ENCODE measurements at regions of chr16 and their contacts with region 1.

Region 1: DNA sequence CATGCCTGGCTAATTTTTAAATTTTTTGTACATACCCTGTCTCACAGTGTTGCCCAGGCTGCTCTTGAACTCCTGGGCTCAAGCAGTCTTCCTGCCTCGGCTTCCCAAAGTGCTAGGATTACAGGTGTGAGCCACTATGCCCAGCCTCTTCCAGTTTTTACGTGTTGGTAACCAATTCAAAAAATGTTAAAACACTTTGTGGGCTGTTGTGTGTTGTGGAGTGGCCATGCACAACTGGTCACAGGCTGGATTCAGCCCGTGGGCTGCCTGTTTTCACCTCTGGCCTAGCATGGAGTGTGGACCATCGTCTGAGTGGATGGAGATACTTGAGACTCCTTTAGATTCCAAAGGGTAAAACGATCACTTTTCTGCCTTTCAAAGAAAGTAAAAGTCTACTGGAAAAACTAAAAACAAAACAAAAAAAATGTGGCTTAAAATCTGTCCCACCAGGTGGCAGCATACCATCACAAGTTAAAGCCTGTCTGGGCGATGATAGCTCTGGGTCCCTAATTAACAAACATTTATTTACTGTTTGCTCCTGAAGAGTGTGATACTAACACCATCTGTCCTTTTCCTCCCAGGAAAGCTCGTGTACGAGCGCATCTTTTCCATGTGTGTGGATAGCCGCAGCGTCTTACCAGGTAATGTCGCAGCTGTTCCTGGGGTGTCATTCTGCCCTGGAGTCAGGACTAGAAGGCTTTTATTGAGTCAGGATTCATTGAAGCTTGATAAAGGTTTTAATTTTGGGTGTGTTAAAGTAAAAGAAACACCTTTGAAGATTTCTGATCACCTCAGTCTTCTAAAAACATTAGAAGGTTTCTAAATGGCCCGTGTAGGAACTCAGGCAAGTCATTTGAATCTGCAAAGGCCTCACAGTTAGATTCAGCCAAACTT is 45.8 kb downstream of the VPS35L start:
- DNase-seq: peak; percentile 38 to 50
- H3K4me3 ChIP-seq: no peak overlapping the region
- H3K27ac ChIP-seq: peak overlapping the region in 2 of 3 donors; percentile 44 to 80
- H3K4me1 ChIP-seq: peaks cover 11 to 13% of the 10 kb centered on the region in 2 donors
- H3K27me3 ChIP-seq: no peaks in the 10 kb centered on the region
- CTCF ChIP-seq: peak; percentile 31 to 87 (median 70)
- POLR2A ChIP-seq: no peak

Region 2: DNA sequence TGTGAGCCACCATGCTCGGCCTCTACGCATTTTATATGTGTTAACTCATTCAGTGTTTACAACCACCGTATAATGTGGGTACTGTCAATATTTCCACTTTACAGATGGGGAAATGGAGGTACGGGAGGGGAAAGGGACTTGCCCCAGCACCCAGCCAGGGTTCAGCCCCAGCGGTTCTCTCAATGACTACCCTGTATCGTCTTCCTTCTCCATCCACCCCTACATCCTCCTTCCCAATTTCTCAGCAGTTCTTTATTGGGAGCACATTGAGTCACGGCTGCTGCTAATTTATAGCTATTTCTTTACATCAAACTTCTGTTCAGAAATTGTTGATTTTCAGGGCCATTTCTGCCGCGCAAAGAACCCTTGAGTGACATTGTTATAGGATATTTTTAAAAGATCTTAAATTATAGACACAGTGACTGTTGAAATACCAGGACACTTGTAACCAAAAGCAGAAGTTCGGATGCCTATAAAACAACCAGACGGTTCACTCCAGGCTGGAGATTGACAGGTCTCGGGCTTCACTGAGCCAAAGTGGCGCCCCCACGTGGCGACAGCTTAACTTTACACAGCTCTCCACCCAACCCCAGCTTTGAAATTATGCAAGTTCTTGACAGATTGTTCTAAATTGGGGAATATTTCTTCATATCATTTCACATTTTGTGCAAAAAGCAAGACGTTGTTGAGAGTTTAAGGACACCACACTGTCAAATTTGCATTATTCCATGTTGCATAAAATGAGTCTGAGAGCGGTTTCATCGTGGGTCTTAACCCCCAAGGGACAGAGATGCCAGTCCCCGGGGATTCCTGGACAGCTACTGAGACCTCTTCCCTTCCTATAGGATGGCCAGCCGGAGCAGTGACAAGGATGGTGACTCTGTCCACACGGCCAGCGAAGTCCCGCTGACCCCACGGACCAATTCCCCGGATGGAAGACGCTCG is 421.5 kb before region 1 on chr16:
- intact Hi-C with region 1: no loop called
- DNase-seq: peak; percentile 27 to 41
- H3K4me3 ChIP-seq: no peak overlapping the region
- H3K27ac ChIP-seq: no peak overlapping the region
- H3K4me1 ChIP-seq: peaks cover 0 to 5% of the 10 kb centered on the region in 2 donors
- H3K27me3 ChIP-seq: no peaks in the 10 kb centered on the region
- CTCF ChIP-seq: peak in 5 of 6 experiments; percentile 13 to 56 (median 42)
- POLR2A ChIP-seq: no peak

Region 3: GRCh38 chr16:19659554-19659953 is 58.2 kb after region 1 on chr16:
- intact Hi-C with region 1: loop called (anchors 10 kb)
- DNase-seq: no peak
- H3K4me3 ChIP-seq: no peak overlapping the region
- H3K27ac ChIP-seq: no peak overlapping the region
- H3K4me1 ChIP-seq: no peaks in the 10 kb centered on the region
- H3K27me3 ChIP-seq: no peaks in the 10 kb centered on the region
- CTCF ChIP-seq: no peak
- POLR2A ChIP-seq: no peak

Region 4: GRCh38 chr16:19672378-19672777 is 71.0 kb after region 1 on chr16:
- intact Hi-C with region 1: no loop called
- DNase-seq: no peak
- H3K4me3 ChIP-seq: no peak overlapping the region
- H3K27ac ChIP-seq: no peak overlapping the region
- H3K4me1 ChIP-seq: no peaks in the 10 kb centered on the region
- H3K27me3 ChIP-seq: no peaks in the 10 kb centered on the region
- CTCF ChIP-seq: no peak
- POLR2A ChIP-seq: no peak

Region 5: GRCh38 chr16:19886073-19886941 is 285.0 kb after region 1 on chr16:
- intact Hi-C with region 1: loop called (anchors 2 kb)
- DNase-seq: peak; percentile 72 to 76
- H3K4me3 ChIP-seq: no peak overlapping the region
- H3K27ac ChIP-seq: no peak overlapping the region
- H3K4me1 ChIP-seq: peaks cover 12 to 15% of the 10 kb centered on the region in 2 donors
- H3K27me3 ChIP-seq: no peaks in the 10 kb centered on the region
- CTCF ChIP-seq: peak in 5 of 6 experiments; percentile 98 to 100 (median 99)
- POLR2A ChIP-seq: no peak

Measured in thyroid gland (tissue), 4 donors.